A549 (cell line): ENCODE measurements at regions of chr1 and their contacts with region 1.

Region 1: GRCh38 chr1:32179443-32180185 is at the start of gene TXLNA:
- DNase-seq: peak; percentile 90 to 92
- ATAC-seq: peak; percentile 94 to 95
- H3K4me3 ChIP-seq: peak within 1 kb of the TSS; percentile 90
- H3K27ac ChIP-seq: peak within 1 kb of the TSS; percentile 89 to 94
- H3K4me1 ChIP-seq: peaks cover 33% of the 10 kb centered on the region
- CTCF ChIP-seq: no peak
- EP300 ChIP-seq: no peak
- POLR2A ChIP-seq: peak; percentile 64
- RAD21 ChIP-seq: no peak
- polyA plus RNA-seq, gene TXLNA: 22.5 and 31.7 TPM in 2 replicates

Region 2: GRCh38 chr1:31991182-31991581 is 188.4 kb before region 1 on chr1:
- CTCF ChIA-PET with region 1: no interaction called
- POLR2A ChIA-PET with region 1: no interaction called
- DNase-seq: no peak
- ATAC-seq: no peak
- H3K4me3 ChIP-seq: no peak overlapping the region
- H3K27ac ChIP-seq: no peak overlapping the region
- H3K4me1 ChIP-seq: no peaks in the 10 kb centered on the region
- CTCF ChIP-seq: no peak
- EP300 ChIP-seq: no peak
- POLR2A ChIP-seq: no peak
- RAD21 ChIP-seq: no peak

Region 3: DNA sequence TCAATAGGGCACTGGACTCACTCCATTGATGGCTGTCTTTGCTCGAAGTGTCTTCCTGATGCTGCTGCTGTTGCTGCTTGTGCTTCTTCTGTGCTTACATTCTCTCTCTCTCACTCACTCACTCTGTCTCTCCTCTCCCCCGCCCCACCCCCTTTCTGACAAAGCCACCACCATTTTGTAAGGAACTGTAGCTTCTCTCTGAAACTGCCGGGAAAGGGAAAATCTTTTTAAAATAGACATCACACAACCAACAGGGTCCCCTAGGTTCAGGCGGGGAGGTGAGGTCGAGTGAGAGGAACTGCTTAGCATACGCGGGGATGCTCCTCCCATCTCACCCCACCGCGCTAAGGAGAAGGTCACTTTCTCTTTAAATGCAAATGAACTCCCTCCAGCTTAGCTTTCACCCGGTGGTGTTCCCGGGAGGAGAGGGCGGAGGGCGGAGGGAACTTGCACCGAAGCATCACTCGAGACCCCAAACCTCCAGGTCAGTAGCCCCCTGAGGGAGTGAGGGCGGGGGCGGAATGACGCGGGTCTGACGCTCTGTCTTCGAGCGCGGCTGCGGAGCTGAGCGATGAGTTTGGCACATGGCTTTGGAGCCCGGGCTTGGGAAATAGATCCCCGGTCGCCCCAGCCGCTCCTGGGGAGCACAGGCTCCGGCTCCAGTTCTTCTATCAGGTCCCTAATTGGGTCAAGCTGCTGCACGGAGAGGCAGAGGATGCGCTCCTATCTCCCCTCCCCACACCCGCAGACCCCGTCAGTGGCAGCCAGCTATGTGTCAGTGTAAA is 20.8 kb after region 1 on chr1 and contains the start of gene CCDC28B:
- CTCF ChIA-PET with region 1: no interaction called
- POLR2A ChIA-PET with region 1: interaction called, 16 read pairs
- DNase-seq: peak in 1 of 2 experiments; percentile 49
- ATAC-seq: peak; percentile 48 to 53
- H3K4me3 ChIP-seq: peak within 1 kb of the TSS; percentile 35
- H3K27ac ChIP-seq: peak within 1 kb of the TSS; percentile 15 to 77; a peak in 5 of 6 replicates
- H3K4me1 ChIP-seq: 0 out of 3 replicates have a peak, but pooled peaks cover 5% of the 10 kb centered on the region
- CTCF ChIP-seq: no peak
- EP300 ChIP-seq: no peak
- POLR2A ChIP-seq: no peak
- RAD21 ChIP-seq: no peak
- polyA plus RNA-seq, gene CCDC28B: 1.1 and 1.2 TPM in 2 replicates

Region 4: DNA sequence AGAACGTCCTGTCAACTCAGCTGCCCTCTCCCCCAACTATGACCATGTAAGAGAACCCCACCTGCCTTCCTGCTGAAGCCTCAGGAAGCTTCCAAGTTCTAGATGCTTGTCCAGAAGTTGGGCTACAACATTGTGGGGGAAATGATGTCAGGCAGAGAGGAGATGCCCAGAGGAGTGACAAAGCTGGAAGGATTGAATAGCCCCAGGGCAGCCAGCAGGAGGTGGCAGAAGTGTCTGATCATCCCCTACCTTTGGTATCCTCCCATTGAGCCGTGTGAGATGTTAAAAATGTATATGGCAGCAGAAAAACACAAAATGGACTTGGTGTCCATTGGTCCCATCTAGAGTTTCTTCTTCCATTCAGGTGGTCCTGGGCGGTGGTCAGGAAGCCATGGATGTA is 49.2 kb after region 1 on chr1:
- CTCF ChIA-PET with region 1: no interaction called
- POLR2A ChIA-PET with region 1: no interaction called
- DNase-seq: no peak
- ATAC-seq: no peak
- H3K4me3 ChIP-seq: no peak overlapping the region
- H3K27ac ChIP-seq: no peak overlapping the region
- H3K4me1 ChIP-seq: peaks cover 4% of the 10 kb centered on the region; the same call in 2 of the 3 replicates
- CTCF ChIP-seq: no peak
- EP300 ChIP-seq: no peak
- POLR2A ChIP-seq: no peak
- RAD21 ChIP-seq: no peak